Heart right ventricle (tissue), 16 donors: ENCODE measurements at regions of chr1 and their contacts with region 1.

Region 1: GRCh38 chr1:204162231-204163074 is 3.7 kb downstream of the REN start:
- DNase-seq: peak; percentile 72 to 81
- ATAC-seq: peak; percentile 82 to 95 (median 86)
- H3K4me3 ChIP-seq: no peak overlapping the region
- H3K27ac ChIP-seq: no peak overlapping the region
- H3K4me1 ChIP-seq: peaks cover 0 to 6% (median 0%) of the 10 kb centered on the region in 9 donors
- H3K27me3 ChIP-seq: peaks cover 0 to 30% (median 10%) of the 10 kb centered on the region in 7 donors
- CTCF ChIP-seq: peak; percentile 97 to 100 (median 99)

Region 2: GRCh38 chr1:204198151-204198994 is 35.9 kb after region 1 on chr1:
- intact Hi-C with region 1: loop called in 1 of 10 experiments (anchors 5 kb)
- DNase-seq: no peak
- ATAC-seq: peak; percentile 29 to 89 (median 74)
- H3K4me3 ChIP-seq: no peak overlapping the region
- H3K27ac ChIP-seq: peak overlapping the region in 2 of 10 donors; percentile 33 to 42
- H3K4me1 ChIP-seq: peaks cover 0 to 19% (median 8%) of the 10 kb centered on the region in 9 donors
- H3K27me3 ChIP-seq: peaks cover 0 to 20% (median 11%) of the 10 kb centered on the region in 7 donors
- CTCF ChIP-seq: peak in 3 of 9 donors; percentile 16 to 31 (median 28)

Region 3: GRCh38 chr1:204207136-204207616 is 44.7 kb after region 1 on chr1:
- intact Hi-C with region 1: loop called in 9 of 10 experiments (anchors 1 to 5 kb)
- DNase-seq: peak; percentile 53 to 75
- ATAC-seq: peak; percentile 69 to 94 (median 87)
- H3K4me3 ChIP-seq: no peak overlapping the region
- H3K27ac ChIP-seq: no peak overlapping the region
- H3K4me1 ChIP-seq: no peaks in the 10 kb centered on the region
- H3K27me3 ChIP-seq: peaks cover 0 to 32% (median 24%) of the 10 kb centered on the region in 7 donors
- CTCF ChIP-seq: peak; percentile 63 to 93 (median 91)

Region 4: DNA sequence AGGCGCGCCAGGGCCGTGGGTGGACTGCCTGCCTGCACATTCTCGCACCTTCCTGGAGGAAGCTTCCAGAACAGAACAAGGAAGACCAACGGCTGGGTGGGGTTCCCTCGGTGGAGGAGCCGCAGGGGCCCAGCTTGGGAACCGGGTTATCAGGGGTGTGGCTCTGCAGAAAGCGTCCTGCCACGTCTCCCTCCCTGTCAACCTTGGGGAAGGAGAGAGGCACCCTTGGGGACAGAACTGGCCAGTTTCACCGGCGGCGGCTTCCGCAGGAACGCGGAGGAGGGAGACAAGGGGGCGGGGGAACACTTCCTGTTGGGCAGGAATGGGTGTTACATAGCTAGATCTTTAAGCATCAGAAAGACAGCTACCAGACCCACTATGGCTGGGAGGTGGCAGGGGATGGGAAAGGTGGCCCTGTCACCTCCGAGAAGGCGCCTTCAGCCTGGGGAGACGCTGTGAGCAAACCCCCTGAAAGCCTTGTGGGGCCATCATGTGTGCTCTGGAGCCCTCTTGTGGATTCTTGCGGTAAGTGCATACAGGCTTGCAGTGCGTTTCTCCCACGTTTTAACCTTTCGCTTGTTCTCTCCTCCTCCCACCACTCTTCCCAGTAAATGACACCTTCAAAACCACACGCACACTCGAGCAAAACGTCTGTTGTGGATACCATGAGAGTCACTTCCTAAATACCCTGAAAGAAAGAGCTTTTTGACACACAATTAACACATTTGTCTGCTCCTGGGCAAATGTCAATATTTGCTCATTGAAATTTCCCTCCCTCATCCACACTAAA is 201.1 kb after region 1 on chr1:
- intact Hi-C with region 1: loop called (anchors 2 to 5 kb)
- DNase-seq: peak; percentile 76 to 81
- ATAC-seq: peak; percentile 70 to 85 (median 84)
- H3K4me3 ChIP-seq: peak overlapping the region in 9 of 10 donors; percentile 24 to 59 (median 47)
- H3K27ac ChIP-seq: peak overlapping the region in 9 of 10 donors; percentile 57 to 81 (median 69)
- H3K4me1 ChIP-seq: peaks cover 4 to 57% (median 34%) of the 10 kb centered on the region in 9 donors
- H3K27me3 ChIP-seq: peaks cover 0 to 17% (median 0%) of the 10 kb centered on the region in 7 donors
- CTCF ChIP-seq: peak; percentile 93 to 98 (median 96)

Region 5: GRCh38 chr1:204377795-204378608 is 215.5 kb after region 1 on chr1:
- intact Hi-C with region 1: loop called in 1 of 10 experiments (anchors 5 kb)
- DNase-seq: peak in 1 of 2 donors; percentile 21
- ATAC-seq: peak; percentile 46 to 80 (median 64)
- H3K4me3 ChIP-seq: peak overlapping the region; percentile 27 to 77 (median 50)
- H3K27ac ChIP-seq: no peak overlapping the region
- H3K4me1 ChIP-seq: peaks cover 0 to 22% (median 13%) of the 10 kb centered on the region in 9 donors
- H3K27me3 ChIP-seq: peaks cover 0 to 78% (median 41%) of the 10 kb centered on the region in 7 donors
- CTCF ChIP-seq: no peak

Region 6: GRCh38 chr1:204398217-204399081 is 236.0 kb after region 1 on chr1:
- intact Hi-C with region 1: loop called in 3 of 10 experiments (anchors 1 to 10 kb)
- DNase-seq: peak; percentile 19 to 44
- ATAC-seq: peak; percentile 66 to 85 (median 81)
- H3K4me3 ChIP-seq: no peak overlapping the region
- H3K27ac ChIP-seq: peak overlapping the region in 1 of 10 donors; percentile 33
- H3K4me1 ChIP-seq: peaks cover 0 to 4% (median 0%) of the 10 kb centered on the region in 9 donors
- H3K27me3 ChIP-seq: no peaks in the 10 kb centered on the region
- CTCF ChIP-seq: peak; percentile 73 to 88 (median 82)

Region 7: DNA sequence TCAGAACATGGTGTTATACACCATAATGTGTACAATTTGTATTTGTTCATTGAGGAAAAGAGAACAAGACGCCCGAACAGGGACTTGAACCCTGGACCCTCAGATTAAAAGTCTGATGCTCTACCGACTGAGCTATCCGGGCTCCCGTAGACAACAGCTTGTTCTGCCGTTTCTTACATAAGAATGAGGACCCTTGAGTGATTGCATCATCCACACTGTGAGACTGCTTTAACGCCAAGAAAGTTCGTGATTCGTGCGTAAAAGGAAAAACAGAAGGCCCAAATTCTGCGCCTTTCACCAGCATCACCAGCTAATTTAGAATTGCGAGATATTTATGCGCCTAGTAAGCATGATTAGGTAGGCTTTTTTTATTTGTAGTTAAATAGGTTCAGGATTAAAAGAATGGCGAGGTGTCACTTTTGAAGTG is 344.5 kb after region 1 on chr1:
- intact Hi-C with region 1: loop called in 2 of 10 experiments (anchors 10 kb)
- DNase-seq: peak; percentile 36 to 88
- ATAC-seq: peak; percentile 74 to 92 (median 90)
- H3K4me3 ChIP-seq: peak overlapping the region; percentile 30 to 68 (median 59)
- H3K27ac ChIP-seq: peak overlapping the region; percentile 68 to 90 (median 86)
- H3K4me1 ChIP-seq: peaks cover 0 to 34% (median 25%) of the 10 kb centered on the region in 9 donors
- H3K27me3 ChIP-seq: no peaks in the 10 kb centered on the region
- CTCF ChIP-seq: no peak